Ascending aorta (tissue), 2 donors: ENCODE measurements at regions of chr10 and their contacts with region 1.

Region 1: GRCh38 chr10:96292971-96293920 is 11.0 kb upstream of the DNTT start:
- DNase-seq: no peak
- H3K4me3 ChIP-seq: no peak overlapping the region
- H3K27ac ChIP-seq: no peak overlapping the region
- H3K4me1 ChIP-seq: peaks cover under 1 to 3% of the 10 kb centered on the region in 2 donors
- H3K27me3 ChIP-seq: no peaks in the 10 kb centered on the region
- CTCF ChIP-seq: peak; percentile 63 to 80 (median 71)

Region 2: GRCh38 chr10:96017191-96017687 is 276.0 kb before region 1 on chr10:
- intact Hi-C with region 1: loop called (anchors 2 kb)
- DNase-seq: no peak
- H3K4me3 ChIP-seq: no peak overlapping the region
- H3K27ac ChIP-seq: no peak overlapping the region
- H3K4me1 ChIP-seq: no peaks in the 10 kb centered on the region
- H3K27me3 ChIP-seq: no peaks in the 10 kb centered on the region
- CTCF ChIP-seq: peak; percentile 42 to 64 (median 62)

Region 3: GRCh38 chr10:96229568-96230030 is 63.6 kb before region 1 on chr10:
- intact Hi-C with region 1: loop called (anchors 1 kb)
- DNase-seq: peak in 1 of 2 donors; percentile 84
- H3K4me3 ChIP-seq: no peak overlapping the region
- H3K27ac ChIP-seq: no peak overlapping the region
- H3K4me1 ChIP-seq: peaks cover 0 to 3% of the 10 kb centered on the region in 2 donors
- H3K27me3 ChIP-seq: no peaks in the 10 kb centered on the region
- CTCF ChIP-seq: peak; percentile 73 to 92 (median 90)